Dorsolateral prefrontal cortex (tissue), 120 donors: ENCODE measurements at regions of chr5 and their contacts with region 1.

Region 1: DNA sequence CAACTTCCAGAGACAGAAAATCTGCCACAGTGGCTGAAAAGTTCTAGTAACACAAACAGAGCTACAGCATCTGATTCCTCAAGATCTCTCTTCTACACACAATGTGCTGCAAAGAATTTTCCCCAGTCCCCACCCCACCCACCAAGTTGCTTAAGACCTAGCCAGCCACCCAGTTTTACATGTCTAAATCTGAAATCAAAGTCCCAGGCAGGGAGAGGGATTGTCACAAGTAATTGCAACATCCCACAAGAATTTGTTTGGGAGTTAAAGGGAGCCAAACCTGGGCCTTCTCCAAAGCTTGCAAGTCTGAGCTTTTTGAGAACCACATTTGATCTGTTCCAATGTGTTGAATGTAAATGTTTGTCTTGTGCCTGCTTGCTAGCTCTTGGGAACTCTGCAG is 15.5 kb downstream of the IGIP start:
- DNase-seq: no peak
- H3K4me3 ChIP-seq: no peak overlapping the region
- H3K27ac ChIP-seq: no peak overlapping the region
- H3K27me3 ChIP-seq: no peaks in the 10 kb centered on the region
- CTCF ChIP-seq: no peak

Region 2: GRCh38 chr5:140073296-140073695 is 67.9 kb before region 1 on chr5:
- intact Hi-C with region 1: loop called in 1 of 2 experiments (anchors 5 kb)
- DNase-seq: no peak
- H3K4me3 ChIP-seq: peak overlapping the region in 22 of 59 donors; percentile 1 to 38 (median 18)
- H3K27ac ChIP-seq: no peak overlapping the region
- H3K27me3 ChIP-seq: no peaks in the 10 kb centered on the region
- CTCF ChIP-seq: peak; percentile 63 to 94 (median 81)

Region 3: GRCh38 chr5:140107312-140108083 is 33.7 kb before region 1 on chr5:
- intact Hi-C with region 1: loop called in 1 of 2 experiments (anchors 5 kb)
- DNase-seq: peak; percentile 79 to 95 (median 92)
- H3K4me3 ChIP-seq: peak overlapping the region; percentile 45 to 90 (median 78)
- H3K27ac ChIP-seq: peak overlapping the region; percentile 85 to 100 (median 98)
- H3K27me3 ChIP-seq: no peaks in the 10 kb centered on the region
- CTCF ChIP-seq: peak in 54 of 56 donors; percentile 11 to 64 (median 42)

Region 4: GRCh38 chr5:140609126-140609525 is 467.9 kb after region 1 on chr5:
- intact Hi-C with region 1: no loop called
- DNase-seq: peak in 5 of 10 donors; percentile 30 to 56 (median 43)
- H3K4me3 ChIP-seq: no peak overlapping the region
- H3K27ac ChIP-seq: peak overlapping the region in 28 of 59 donors; percentile 3 to 72 (median 32)
- H3K27me3 ChIP-seq: no peaks in the 10 kb centered on the region
- CTCF ChIP-seq: no peak